Esophagus muscularis mucosa (tissue), 4 donors: ENCODE measurements at regions of chr14 and their contacts with region 1.

Region 1: GRCh38 chr14:73886449-73887317 is at the start of gene ZNF410:
- DNase-seq: peak; percentile 98
- H3K4me3 ChIP-seq: peak within 1 kb of the TSS; percentile 65 to 88 (median 82)
- H3K27ac ChIP-seq: peak within 1 kb of the TSS; percentile 88 to 95 (median 93)
- H3K4me1 ChIP-seq: peaks cover 24 to 49% (median 32%) of the 10 kb centered on the region in 4 donors
- H3K27me3 ChIP-seq: no peaks in the 10 kb centered on the region
- CTCF ChIP-seq: peak in 1 of 3 experiments; percentile 5
- EP300 ChIP-seq: peak; percentile 42
- POLR2A ChIP-seq: peak; percentile 48
- total RNA-seq, gene ZNF410: 36.5 to 67.6 (median 41.6) TPM

Region 2: GRCh38 chr14:73728717-73729330 is 157.9 kb before region 1 on chr14:
- intact Hi-C with region 1: loop called (anchors 10 kb)
- DNase-seq: peak; percentile 95
- H3K4me3 ChIP-seq: no peak overlapping the region
- H3K27ac ChIP-seq: peak overlapping the region; percentile 65 to 98 (median 90)
- H3K4me1 ChIP-seq: peaks cover 64 to 84% (median 79%) of the 10 kb centered on the region in 4 donors
- H3K27me3 ChIP-seq: no peaks in the 10 kb centered on the region
- CTCF ChIP-seq: peak; percentile 94 to 95 (median 95)
- EP300 ChIP-seq: no peak
- POLR2A ChIP-seq: no peak

Region 3: DNA sequence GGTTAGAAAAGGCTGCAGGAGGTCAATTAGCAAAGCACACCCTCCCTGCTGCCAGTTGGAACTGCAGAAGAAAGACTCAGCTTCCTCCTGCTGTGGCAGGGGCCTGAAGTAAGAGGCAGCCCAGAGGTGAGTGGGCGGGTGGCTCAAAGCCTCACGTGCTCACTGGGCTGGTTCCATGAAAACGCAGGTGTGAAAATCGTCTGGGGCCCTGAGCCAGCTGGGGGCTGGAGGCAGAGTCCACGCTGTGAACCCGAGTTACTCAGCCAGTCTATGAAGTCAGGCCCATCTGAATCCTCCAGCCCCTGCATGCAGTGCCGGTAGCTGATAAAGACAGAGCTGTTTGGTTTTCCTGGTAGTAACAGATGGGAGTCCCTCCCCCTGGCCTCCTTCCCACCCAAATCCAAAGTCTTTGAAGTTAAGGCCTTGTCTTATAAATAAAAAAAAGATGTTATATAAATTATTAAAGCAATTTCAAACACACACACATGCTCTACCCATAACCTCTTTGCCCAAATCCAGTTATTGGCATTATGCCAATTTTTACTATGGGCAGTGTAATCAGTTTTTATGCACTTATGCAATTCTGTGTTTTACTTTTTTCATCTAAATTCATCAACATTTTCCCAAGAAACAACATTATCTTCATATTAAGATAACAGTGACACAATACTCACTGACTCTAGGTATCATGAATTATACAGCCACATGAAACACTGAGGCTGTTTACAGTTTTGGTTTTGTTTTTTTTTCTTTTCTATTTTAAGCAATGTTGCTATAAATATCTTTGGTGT is 114.6 kb before region 1 on chr14:
- intact Hi-C with region 1: no loop called
- DNase-seq: no peak
- H3K4me3 ChIP-seq: no peak overlapping the region
- H3K27ac ChIP-seq: peak overlapping the region; percentile 65 to 81 (median 70)
- H3K4me1 ChIP-seq: peaks cover 93 to 97% (median 95%) of the 10 kb centered on the region in 4 donors
- H3K27me3 ChIP-seq: no peaks in the 10 kb centered on the region
- CTCF ChIP-seq: no peak
- EP300 ChIP-seq: no peak
- POLR2A ChIP-seq: no peak

Region 4: DNA sequence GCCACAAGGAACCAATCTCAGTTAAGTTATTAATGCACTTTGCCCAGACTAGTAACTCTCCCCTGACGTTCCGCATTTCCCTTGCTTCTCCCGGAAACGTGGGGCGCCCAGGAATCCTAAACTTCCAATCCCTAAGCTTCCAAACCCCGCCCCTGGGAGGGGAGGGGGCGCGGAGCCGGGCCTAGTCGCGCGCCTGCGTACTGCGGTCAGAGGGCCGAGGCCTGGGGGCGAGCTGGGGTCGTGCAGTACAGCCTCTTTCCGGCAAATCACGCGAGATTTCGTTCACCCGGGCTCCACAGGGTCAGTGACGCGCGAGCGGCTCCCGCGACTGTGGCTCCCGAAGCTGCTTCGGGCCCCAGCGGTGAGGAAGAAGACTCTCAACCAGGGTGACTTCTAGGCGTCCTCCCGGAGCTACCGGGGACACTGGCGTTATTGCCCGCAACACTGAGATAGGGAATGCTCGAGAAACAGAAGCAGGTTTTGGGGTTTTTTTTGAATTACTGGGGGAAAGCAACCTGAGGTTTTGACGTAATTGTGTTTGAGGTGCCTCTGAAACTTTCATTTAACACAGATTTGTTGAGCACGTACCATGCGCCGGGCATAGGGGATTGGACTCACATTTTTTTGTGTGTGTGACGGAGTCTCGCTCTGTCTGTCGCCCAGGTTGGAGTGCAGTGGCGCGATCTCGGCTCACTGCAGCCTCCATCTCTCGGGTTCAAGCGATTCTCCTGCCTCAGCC is 34.9 kb before region 1 on chr14 and contains the start of gene PTGR2:
- intact Hi-C with region 1: loop called (anchors 5 kb)
- DNase-seq: peak; percentile 99
- H3K4me3 ChIP-seq: peak within 1 kb of the TSS; percentile 52 to 66 (median 64)
- H3K27ac ChIP-seq: peak within 1 kb of the TSS; percentile 87 to 93 (median 90)
- H3K4me1 ChIP-seq: peaks cover 16 to 21% (median 19%) of the 10 kb centered on the region in 4 donors
- H3K27me3 ChIP-seq: no peaks in the 10 kb centered on the region
- CTCF ChIP-seq: peak in 2 of 3 experiments; percentile 26 to 35
- EP300 ChIP-seq: no peak
- POLR2A ChIP-seq: peak; percentile 77
- total RNA-seq, gene PTGR2: 2.5 to 7.1 (median 4.3) TPM

Region 5: GRCh38 chr14:73991092-73991491 is 104.4 kb after region 1 on chr14:
- intact Hi-C with region 1: no loop called
- DNase-seq: no peak
- H3K4me3 ChIP-seq: no peak overlapping the region
- H3K27ac ChIP-seq: no peak overlapping the region
- H3K4me1 ChIP-seq: no peaks in the 10 kb centered on the region
- H3K27me3 ChIP-seq: no peaks in the 10 kb centered on the region
- CTCF ChIP-seq: no peak
- EP300 ChIP-seq: no peak
- POLR2A ChIP-seq: no peak

Region 6: DNA sequence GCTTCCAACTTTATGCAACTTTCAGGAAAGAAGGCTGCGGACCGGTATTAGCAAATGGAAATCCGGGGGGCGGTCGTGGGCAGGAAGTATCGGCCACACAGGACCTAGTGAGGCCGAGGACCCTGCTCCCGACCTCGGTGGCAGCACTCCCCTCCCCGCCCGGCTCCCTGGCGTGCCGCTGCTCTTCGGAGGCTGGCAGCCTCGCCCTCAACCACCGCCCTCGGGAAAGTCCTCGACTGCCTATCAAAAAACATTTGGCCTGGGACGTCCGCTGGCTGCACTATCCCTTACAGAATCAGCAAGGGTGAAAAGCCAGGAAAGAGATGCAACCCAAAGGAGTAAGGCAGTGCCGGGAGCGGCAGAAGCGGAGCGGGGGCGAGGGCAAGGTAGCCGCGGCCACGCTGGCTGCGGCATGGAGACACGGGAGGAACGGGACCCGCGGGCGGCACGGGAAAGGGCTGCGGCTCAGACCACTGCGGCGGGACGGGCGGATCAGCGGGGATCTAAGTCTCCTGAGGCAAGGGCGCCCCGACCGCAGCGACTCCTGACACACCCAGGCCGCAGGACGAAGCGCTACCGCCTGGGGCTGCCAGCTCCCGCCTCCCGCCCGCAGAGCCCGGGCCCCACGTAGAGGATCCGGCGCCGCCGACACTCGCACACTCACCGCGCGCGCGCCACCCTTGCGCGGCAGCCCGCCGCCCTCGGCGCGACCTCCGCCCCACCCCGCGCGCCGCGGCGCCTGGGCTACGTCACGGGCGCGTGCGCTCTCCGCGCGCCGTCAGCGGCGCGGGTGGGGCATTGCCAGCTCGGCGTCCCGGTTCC is 132.1 kb after region 1 on chr14 and contains the starts of genes BBOF1 and ENTPD5:
- intact Hi-C with region 1: loop called (anchors 5 kb)
- DNase-seq: peak; percentile 93
- H3K4me3 ChIP-seq: peak within 1 kb of the TSS; percentile 80 to 91 (median 86)
- H3K27ac ChIP-seq: peak within 1 kb of the TSS; percentile 95 to 99 (median 98)
- H3K4me1 ChIP-seq: peaks cover 11 to 23% (median 17%) of the 10 kb centered on the region in 4 donors
- H3K27me3 ChIP-seq: no peaks in the 10 kb centered on the region
- CTCF ChIP-seq: peak in 1 of 3 experiments; percentile 19
- EP300 ChIP-seq: no peak
- POLR2A ChIP-seq: peak; percentile 67
- total RNA-seq, gene BBOF1: 8.6 to 11.8 (median 9.9) TPM
- total RNA-seq, gene ENTPD5: 5.5 to 9.6 (median 6.0) TPM